Spleen (tissue), 13 donors: ENCODE measurements at regions of chr14 and their contacts with region 1.

Region 1: DNA sequence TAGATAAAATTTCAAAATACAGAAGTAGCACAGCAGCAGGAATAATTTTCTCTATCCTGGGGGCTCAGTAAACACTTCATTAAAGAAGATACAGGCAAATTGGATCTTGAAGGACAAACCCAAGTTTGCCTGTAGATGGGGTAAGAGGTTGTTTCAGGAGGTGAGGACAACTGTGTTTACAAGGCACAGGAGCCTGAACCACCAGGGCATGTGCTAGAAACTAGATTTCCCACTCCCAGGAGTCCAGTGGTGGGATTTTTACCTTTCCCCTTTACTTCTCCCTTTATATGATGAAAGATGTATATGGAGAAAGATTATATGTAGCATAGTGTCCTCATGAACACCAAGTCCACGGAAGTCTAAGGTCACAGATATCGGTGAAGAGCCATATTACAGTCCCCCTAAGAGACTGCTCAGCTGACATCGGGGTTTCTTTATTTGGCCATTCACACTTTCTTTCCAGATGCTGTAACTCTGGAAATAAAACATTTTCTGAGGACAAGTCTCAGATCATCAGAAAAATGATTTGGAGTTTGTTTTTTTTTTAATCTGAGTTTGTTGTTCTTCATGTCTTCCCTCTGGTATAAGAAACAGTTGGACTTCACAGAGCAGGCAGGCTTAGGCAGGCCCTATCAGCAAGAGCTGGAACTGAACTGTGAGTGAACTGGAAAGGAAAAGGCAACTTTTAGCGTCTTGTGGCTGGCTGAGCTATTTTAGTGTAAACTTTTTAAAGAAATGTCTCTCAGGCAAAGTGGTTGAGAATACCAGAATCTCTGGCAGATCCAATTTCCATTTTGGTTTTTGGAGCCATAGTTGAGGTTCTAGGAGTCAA is 8.0 kb upstream of the EVL start:
- DNase-seq: no peak
- H3K4me3 ChIP-seq: no peak overlapping the region
- H3K27ac ChIP-seq: peak overlapping the region in 1 of 8 donors; percentile 57
- H3K4me1 ChIP-seq: peaks cover 0 to 52% (median 31%) of the 10 kb centered on the region in 6 donors
- H3K27me3 ChIP-seq: no peaks in the 10 kb centered on the region
- CTCF ChIP-seq: peak in 9 of 11 experiments; percentile 15 to 61 (median 39)
- POLR2A ChIP-seq: no peak

Region 2: DNA sequence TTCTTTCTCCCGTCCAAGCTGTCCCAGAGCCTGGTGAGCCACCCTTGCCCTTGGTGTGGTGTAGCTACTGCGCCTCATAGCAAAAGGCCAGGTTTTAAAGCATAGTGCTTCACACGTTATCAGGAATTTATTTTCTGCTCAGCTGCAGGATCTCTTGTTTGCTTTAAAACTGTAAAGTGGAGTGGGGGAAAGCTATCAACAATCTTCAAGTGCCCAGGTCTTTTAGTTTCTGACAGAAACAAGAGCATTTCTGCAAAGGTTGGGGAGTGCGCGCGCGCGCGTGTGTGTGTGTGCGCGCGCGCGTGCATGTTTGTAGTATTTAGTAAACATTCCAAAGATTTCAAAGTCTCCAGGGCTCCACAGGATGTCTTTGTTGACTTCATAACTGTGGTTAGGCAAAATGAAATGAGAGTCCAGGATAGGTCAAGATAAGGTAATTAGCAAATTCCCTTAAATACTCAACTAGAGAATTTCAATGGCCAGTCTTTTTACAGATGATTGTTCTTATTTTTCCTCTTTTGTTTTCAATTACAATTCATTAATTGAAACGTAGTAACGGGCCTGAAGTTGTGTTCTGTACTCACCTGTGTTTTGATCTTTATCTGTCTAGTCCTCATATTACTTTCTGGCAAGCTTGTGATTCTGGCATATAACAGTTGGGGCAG is 218.4 kb before region 1 on chr14:
- intact Hi-C with region 1: no loop called
- DNase-seq: no peak
- H3K4me3 ChIP-seq: no peak overlapping the region
- H3K27ac ChIP-seq: no peak overlapping the region
- H3K4me1 ChIP-seq: no peaks in the 10 kb centered on the region
- H3K27me3 ChIP-seq: peaks cover 0 to 47% (median 0%) of the 10 kb centered on the region in 7 donors
- CTCF ChIP-seq: no peak
- POLR2A ChIP-seq: no peak

Region 3: GRCh38 chr14:99930420-99931274 is 126.5 kb before region 1 on chr14:
- intact Hi-C with region 1: no loop called
- DNase-seq: no peak
- H3K4me3 ChIP-seq: no peak overlapping the region
- H3K27ac ChIP-seq: no peak overlapping the region
- H3K4me1 ChIP-seq: no peaks in the 10 kb centered on the region
- H3K27me3 ChIP-seq: peaks cover 0 to 8% (median 0%) of the 10 kb centered on the region in 7 donors
- CTCF ChIP-seq: no peak
- POLR2A ChIP-seq: no peak

Region 4: DNA sequence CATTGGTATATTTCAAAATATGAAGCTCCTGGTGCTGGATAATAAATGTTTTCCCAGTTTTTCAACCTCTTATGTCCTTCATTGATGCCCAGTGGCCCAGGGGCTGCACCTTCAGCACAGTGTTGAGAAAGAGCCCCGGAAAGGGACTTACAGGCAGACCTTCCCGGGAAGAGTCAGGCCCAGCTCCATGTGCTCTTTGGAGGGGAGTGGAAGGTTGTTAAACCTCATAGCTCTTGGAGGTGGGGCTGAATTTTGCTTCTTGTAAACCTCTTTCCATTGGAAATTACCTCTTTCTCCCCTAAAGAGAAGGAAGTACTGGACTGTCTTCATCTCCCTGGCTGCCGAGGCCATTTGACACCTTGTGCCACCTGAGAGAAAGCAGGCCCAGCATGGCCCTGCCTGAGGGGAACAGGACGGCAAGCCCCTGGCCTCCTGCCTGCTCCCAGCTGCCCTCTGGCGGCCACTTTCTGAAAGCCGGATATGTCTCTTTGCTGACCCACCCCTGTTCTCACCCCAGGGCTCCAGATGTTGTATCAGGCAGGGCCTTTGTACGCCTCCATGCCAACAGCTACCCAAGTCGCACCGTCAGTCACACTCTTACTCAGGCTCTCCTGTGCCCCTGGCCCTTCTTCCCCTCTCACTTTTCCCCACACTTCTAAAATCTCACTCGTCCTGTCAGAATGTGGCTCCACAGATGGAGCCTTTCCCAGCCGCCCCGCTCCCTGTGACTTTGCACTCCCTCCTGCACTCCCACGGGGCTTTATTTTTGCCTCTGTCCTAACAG is 51.1 kb after region 1 on chr14:
- intact Hi-C with region 1: loop called (anchors 10 kb)
- DNase-seq: peak; percentile 94
- H3K4me3 ChIP-seq: no peak overlapping the region
- H3K27ac ChIP-seq: peak overlapping the region in 5 of 8 donors; percentile 17 to 80 (median 70)
- H3K4me1 ChIP-seq: peaks cover 33 to 81% (median 58%) of the 10 kb centered on the region in 6 donors
- H3K27me3 ChIP-seq: no peaks in the 10 kb centered on the region
- CTCF ChIP-seq: peak; percentile 66 to 90 (median 83)
- POLR2A ChIP-seq: no peak